ENCODE measurements at regions of chr13 and their contacts with region 1.

Region 1: DNA sequence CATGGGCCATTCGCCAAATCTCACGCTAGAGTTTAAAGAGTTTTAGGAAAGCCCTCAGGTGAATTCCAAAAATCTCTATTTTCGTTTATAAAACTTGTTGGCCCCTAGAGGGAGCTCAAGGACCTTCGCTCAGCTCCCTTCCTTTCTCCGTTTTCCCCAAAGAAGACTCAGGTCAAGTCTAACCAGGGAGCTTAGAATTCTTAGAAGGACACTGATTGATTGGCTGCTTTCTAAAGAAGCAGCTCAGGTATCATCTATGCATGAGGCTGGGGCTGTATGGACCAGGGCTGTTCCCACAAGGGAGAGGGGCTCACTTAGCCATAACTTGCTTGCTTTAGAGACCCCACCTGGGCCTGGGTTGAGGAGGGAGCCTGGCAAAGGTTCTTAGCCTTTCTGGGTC is 20.5 kb downstream of the DZIP1 start:
- DNase-seq: peak; percentile 29
- H3K4me3 ChIP-seq: no peak overlapping the region
- H3K27ac ChIP-seq: no peak overlapping the region
- H3K4me1 ChIP-seq: no peaks in the 10 kb centered on the region
- H3K27me3 ChIP-seq: no peaks in the 10 kb centered on the region
- CTCF ChIP-seq: peak; percentile 47

Region 2: DNA sequence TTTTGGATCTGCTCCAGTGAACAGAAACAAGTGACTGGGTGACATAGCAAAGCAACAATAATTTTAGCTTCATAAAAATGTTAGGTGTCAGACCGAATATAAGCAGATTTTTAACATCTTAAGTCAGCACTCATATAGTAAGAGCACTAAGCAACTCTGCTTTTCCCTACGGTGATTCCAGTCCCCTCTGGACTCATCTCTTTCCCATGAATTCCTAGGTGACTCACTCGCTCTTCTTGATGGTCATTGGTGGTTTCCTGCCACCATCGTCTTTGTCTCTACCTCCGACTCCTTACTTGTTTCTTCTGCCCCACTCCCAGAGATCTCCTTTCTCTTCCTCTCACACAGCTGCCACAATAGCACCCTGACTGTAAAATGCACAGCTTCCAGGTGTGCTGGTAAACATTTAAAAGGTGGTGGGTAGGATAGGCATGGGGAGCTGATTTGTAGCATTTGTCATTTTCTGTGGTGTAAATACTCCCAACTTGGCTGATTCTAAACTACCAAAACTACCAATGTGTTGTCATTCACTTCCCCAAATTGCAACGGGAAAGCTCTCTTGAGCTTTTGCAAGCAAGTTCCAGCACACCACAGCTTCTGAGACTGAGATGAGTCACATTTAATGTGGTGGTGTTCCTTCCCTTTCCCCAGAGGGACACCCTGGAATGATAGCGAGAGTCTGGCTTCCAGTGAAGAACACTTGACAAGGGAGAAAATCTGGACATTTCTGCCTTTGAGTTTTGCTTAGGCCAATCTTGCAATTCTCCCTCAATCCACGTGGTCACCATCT is 114.3 kb before region 1 on chr13:
- intact Hi-C with region 1: no loop called
- DNase-seq: no peak
- H3K4me3 ChIP-seq: no peak overlapping the region
- H3K27ac ChIP-seq: no peak overlapping the region
- H3K4me1 ChIP-seq: no peaks in the 10 kb centered on the region
- H3K27me3 ChIP-seq: no peaks in the 10 kb centered on the region
- CTCF ChIP-seq: no peak

Region 3: GRCh38 chr13:95834134-95834765 is 210.2 kb after region 1 on chr13:
- intact Hi-C with region 1: loop called (anchors 2 kb)
- DNase-seq: peak; percentile 62
- H3K4me3 ChIP-seq: no peak overlapping the region
- H3K27ac ChIP-seq: no peak overlapping the region
- H3K4me1 ChIP-seq: no peaks in the 10 kb centered on the region
- H3K27me3 ChIP-seq: no peaks in the 10 kb centered on the region
- CTCF ChIP-seq: peak; percentile 80

Region 4: GRCh38 chr13:96003304-96003703 is 379.3 kb after region 1 on chr13:
- intact Hi-C with region 1: no loop called
- DNase-seq: no peak
- H3K4me3 ChIP-seq: no peak overlapping the region
- H3K27ac ChIP-seq: no peak overlapping the region
- H3K4me1 ChIP-seq: no peaks in the 10 kb centered on the region
- H3K27me3 ChIP-seq: no peaks in the 10 kb centered on the region
- CTCF ChIP-seq: no peak

Region 5: DNA sequence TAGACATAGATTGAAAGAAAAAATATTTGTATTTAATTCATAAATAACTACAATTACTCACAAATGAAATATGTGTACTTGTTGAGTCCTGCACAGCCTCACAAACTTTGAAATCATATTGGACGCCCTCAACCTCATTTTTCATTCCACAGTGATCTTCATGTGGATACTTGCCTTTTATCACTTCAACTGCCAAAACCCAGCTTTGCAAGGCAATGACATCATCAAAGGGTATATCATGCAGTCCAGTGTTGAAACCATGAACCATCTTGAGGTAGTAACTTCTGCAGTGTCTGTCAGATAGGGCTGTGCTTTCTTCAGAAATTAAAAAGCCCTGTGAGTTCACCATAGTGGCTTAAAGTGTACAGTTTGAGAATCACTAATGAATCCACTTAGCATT is 548.0 kb after region 1 on chr13:
- intact Hi-C with region 1: no loop called
- DNase-seq: no peak
- H3K4me3 ChIP-seq: no peak overlapping the region
- H3K27ac ChIP-seq: no peak overlapping the region
- H3K4me1 ChIP-seq: no peaks in the 10 kb centered on the region
- H3K27me3 ChIP-seq: no peaks in the 10 kb centered on the region
- CTCF ChIP-seq: no peak

Measured in colonic mucosa (tissue), 4 donors.